Posterior cingulate gyrus (tissue), 11 donors: ENCODE measurements at regions of chr11 and their contacts with region 1.

Region 1: GRCh38 chr11:18395735-18396504 is 1.6 kb downstream of the LDHA start:
- DNase-seq: peak; percentile 93 to 99 (median 95)

Region 2: GRCh38 chr11:18321980-18322711 is 73.8 kb before region 1 on chr11 and contains the starts of genes GTF2H1 and HPS5:
- intact Hi-C with region 1: loop called (anchors 1 kb)
- DNase-seq: peak; percentile 92 to 99 (median 96)